ENCODE measurements at regions of chr4 and their contacts with region 1.

Region 1: GRCh38 chr4:82373816-82374625 is at the start of gene HNRNPD:
- DNase-seq: peak; percentile 94
- H3K4me3 Mint-ChIP-seq: peak within 1 kb of the TSS; percentile 95
- H3K27ac Mint-ChIP-seq: peak within 1 kb of the TSS; percentile 96
- H3K4me1 Mint-ChIP-seq: peaks cover 40% of the 10 kb centered on the region
- H3K27me3 Mint-ChIP-seq: no peaks in the 10 kb centered on the region
- total RNA-seq, gene HNRNPD: 355 to 366 TPM

Region 2: GRCh38 chr4:82192017-82192673 is 181.9 kb before region 1 on chr4:
- CTCF ChIA-PET with region 1: no interaction called
- POLR2A ChIA-PET with region 1: no interaction called
- DNase-seq: no peak
- H3K4me3 Mint-ChIP-seq: no peak overlapping the region
- H3K27ac Mint-ChIP-seq: no peak overlapping the region
- H3K4me1 Mint-ChIP-seq: no peaks in the 10 kb centered on the region
- H3K27me3 Mint-ChIP-seq: no peaks in the 10 kb centered on the region

Region 3: DNA sequence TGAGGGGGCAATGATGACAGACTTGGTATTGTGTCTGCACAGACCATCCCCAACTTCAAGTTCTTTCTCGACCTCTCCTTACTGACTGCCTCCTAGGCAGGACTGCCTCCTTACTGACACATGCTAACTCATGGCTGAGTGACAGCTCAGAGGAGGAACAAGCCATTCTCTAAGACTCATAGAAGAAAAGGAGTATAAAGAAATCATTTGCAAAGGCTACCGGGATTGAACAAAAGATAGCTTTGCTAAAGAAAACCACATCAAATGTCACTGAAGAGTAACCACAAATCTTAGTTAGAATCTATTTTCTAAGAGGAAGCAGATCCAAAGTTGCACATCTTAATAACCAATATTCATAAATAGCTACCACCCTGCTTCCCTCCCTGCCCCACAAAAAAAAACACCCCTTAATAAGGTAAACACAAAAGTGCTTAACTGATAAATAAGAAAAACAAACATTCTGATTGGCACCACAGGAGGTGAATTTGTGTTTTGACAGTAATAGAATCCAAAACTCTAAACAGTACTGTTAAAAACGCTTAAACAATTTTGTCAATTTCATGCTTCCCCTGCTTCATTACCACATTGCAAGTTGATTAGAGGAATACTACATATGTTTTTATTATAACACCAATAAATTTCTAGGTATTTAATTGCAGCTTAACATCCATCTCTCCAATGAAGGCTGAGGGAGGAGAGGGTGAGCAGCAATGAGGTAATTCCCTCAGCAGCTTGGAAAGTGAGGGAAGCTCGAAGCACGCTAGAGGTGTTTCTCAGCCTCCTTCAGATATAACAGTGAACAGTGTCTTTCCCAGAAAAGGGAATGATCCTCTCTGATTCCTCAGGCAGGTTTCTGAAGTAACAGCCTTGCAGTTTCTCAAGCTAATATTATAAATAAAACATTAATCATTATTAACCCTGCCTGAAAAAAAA is 160.3 kb before region 1 on chr4:
- CTCF ChIA-PET with region 1: no interaction called
- POLR2A ChIA-PET with region 1: no interaction called
- DNase-seq: no peak
- H3K4me3 Mint-ChIP-seq: no peak overlapping the region
- H3K27ac Mint-ChIP-seq: no peak overlapping the region
- H3K4me1 Mint-ChIP-seq: peaks cover 10% of the 10 kb centered on the region
- H3K27me3 Mint-ChIP-seq: peaks cover 4% of the 10 kb centered on the region

Region 4: GRCh38 chr4:82352913-82353366 is 21.1 kb before region 1 on chr4:
- CTCF ChIA-PET with region 1: interaction called, 3 read pairs
- POLR2A ChIA-PET with region 1: interaction called, 10 read pairs
- DNase-seq: no peak
- H3K4me3 Mint-ChIP-seq: no peak overlapping the region
- H3K27ac Mint-ChIP-seq: peak overlapping the region; percentile 60
- H3K4me1 Mint-ChIP-seq: peaks cover 56% of the 10 kb centered on the region
- H3K27me3 Mint-ChIP-seq: no peaks in the 10 kb centered on the region

Region 5: GRCh38 chr4:82360298-82361177 is 13.5 kb before region 1 on chr4:
- CTCF ChIA-PET with region 1: interaction called, 13 read pairs
- POLR2A ChIA-PET with region 1: interaction called, 35 read pairs
- DNase-seq: no peak
- H3K4me3 Mint-ChIP-seq: no peak overlapping the region
- H3K27ac Mint-ChIP-seq: peak overlapping the region; percentile 11
- H3K4me1 Mint-ChIP-seq: peaks cover 86% of the 10 kb centered on the region
- H3K27me3 Mint-ChIP-seq: no peaks in the 10 kb centered on the region

Region 6: GRCh38 chr4:82423245-82424054 is 49.4 kb after region 1 on chr4:
- CTCF ChIA-PET with region 1: interaction called, 39 read pairs
- POLR2A ChIA-PET with region 1: interaction called, 313 read pairs
- DNase-seq: no peak
- H3K4me3 Mint-ChIP-seq: no peak overlapping the region
- H3K27ac Mint-ChIP-seq: no peak overlapping the region
- H3K4me1 Mint-ChIP-seq: peaks cover 38% of the 10 kb centered on the region
- H3K27me3 Mint-ChIP-seq: no peaks in the 10 kb centered on the region

Measured in activated CD4-positive, alpha-beta memory T cell treated with anti-CD3 and anti-CD28 coated beads, Interleukin-2, amount 10 ng/mL, durations not matched to agents 7 days and 5 days (primary cell).